ENCODE measurements at regions of chr11 and their contacts with region 1.

Region 1: GRCh38 chr11:44848203-44848962 is 102.3 kb downstream of the TP53I11 start:
- DNase-seq: no peak
- ATAC-seq: no peak
- H3K4me3 ChIP-seq: no peak overlapping the region
- H3K27ac ChIP-seq: no peak overlapping the region
- H3K4me1 ChIP-seq: peaks cover 9% of the 10 kb centered on the region
- H3K27me3 ChIP-seq: no peaks in the 10 kb centered on the region
- CTCF ChIP-seq: no peak

Region 2: DNA sequence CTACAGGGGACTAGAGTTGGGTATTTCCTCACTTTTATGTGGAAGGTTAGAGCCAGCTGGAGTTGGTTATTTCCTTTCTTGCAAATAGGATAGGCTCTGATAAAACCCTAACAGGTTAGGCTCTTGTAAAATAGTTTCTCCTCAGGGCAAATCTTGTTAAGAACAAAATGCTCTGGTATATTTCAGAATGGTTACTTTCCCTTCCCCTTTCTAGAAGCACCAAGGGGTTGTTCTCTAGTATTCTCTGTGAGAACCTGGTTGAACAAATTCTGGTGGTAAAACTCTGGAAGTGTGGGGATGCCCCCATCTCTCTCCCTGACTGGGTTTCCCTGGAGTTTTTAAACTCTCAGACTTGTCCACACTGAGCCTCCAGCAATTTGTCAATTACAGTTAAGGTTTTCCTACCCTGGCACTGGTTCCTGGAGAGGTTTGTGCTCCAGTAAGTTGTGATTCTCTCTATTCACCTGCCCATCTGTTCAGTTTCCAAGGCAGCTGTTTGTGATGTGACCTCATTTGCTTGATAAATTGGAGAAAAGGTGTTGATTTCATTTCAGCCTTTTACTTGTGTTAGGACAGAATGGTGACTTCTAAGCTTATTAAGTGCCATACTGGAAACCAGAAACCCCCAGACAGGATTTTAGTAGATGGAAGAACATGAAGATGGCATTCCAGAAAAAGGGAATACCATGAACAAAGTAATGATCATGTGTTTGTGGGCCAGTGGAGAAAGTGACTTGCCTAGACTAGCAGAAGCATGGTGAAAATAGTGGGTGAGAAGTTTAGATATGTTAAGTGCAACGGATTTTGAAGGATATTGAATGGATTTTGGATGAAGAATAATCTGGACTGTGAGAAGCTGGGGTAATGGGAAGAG is 688.3 kb before region 1 on chr11:
- CTCF ChIA-PET with region 1: no interaction called
- POLR2A ChIA-PET with region 1: no interaction called
- intact Hi-C with region 1: no loop called
- DNase-seq: no peak
- ATAC-seq: no peak
- H3K4me3 ChIP-seq: no peak overlapping the region
- H3K27ac ChIP-seq: no peak overlapping the region
- H3K4me1 ChIP-seq: no peaks in the 10 kb centered on the region
- H3K27me3 ChIP-seq: no peaks in the 10 kb centered on the region
- CTCF ChIP-seq: no peak

Region 3: GRCh38 chr11:44837661-44838060 is 10.7 kb before region 1 on chr11:
- CTCF ChIA-PET with region 1: no interaction called
- POLR2A ChIA-PET with region 1: interaction called, 11 read pairs
- intact Hi-C with region 1: no loop called
- DNase-seq: peak; percentile 30
- ATAC-seq: 0 out of 2 replicates have a peak, but pooled peaks have one; percentile 29
- H3K4me3 ChIP-seq: no peak overlapping the region
- H3K27ac ChIP-seq: no peak overlapping the region
- H3K4me1 ChIP-seq: peaks cover 6% of the 10 kb centered on the region; the same call in 1 of the 2 replicates
- H3K27me3 ChIP-seq: no peaks in the 10 kb centered on the region
- CTCF ChIP-seq: no peak

Region 4: GRCh38 chr11:44861849-44862749 is 13.7 kb after region 1 on chr11:
- CTCF ChIA-PET with region 1: no interaction called
- POLR2A ChIA-PET with region 1: no interaction called
- intact Hi-C with region 1: loop called (anchors 1 kb)
- DNase-seq: peak; percentile 97
- ATAC-seq: peak; percentile 99
- H3K4me3 ChIP-seq: no peak overlapping the region
- H3K27ac ChIP-seq: peak overlapping the region; percentile 47
- H3K4me1 ChIP-seq: peaks cover 16% of the 10 kb centered on the region
- H3K27me3 ChIP-seq: no peaks in the 10 kb centered on the region
- CTCF ChIP-seq: no peak

Region 5: DNA sequence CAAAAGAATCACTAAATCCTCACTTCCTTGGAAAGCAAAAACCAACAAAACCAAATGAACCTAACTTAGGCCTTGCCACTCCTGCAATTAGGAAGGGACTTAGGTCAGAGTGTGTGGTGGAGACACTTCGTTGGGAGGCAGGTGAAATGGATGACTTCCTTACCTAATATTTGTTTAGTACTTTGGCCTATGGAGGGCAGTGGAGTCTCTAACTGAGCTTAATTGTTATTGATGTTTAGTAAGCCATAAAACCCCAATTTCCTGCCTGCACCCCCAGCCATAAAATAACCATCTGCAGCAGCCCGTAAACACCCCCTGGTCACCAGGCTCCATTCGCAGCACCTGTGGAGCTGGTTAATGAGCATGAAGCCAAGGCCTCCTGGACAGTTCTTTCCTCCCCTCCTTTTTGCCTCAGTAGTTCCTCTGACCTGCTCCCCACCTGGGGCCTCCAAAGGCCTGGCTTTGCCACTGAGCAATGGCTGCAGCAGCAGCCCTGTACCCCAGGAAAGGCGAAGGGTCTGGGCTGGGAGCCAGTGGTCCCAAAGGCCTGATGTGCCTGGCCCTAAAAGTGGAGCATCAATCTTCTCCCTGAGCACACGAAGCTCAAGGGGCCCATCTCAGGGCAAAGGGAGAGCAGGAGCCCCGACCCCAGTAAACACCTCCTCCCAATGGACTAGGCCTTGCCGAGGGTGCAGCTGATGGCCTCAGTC is 453.3 kb after region 1 on chr11:
- CTCF ChIA-PET with region 1: no interaction called
- POLR2A ChIA-PET with region 1: no interaction called
- intact Hi-C with region 1: no loop called
- DNase-seq: no peak
- ATAC-seq: no peak
- H3K4me3 ChIP-seq: no peak overlapping the region
- H3K27ac ChIP-seq: no peak overlapping the region
- H3K4me1 ChIP-seq: no peaks in the 10 kb centered on the region
- H3K27me3 ChIP-seq: peaks cover 45% of the 10 kb centered on the region
- CTCF ChIP-seq: no peak

Measured in PC-3 (cell line).